ENCODE measurements at regions of chr18 and their contacts with region 1.

Region 1: GRCh38 chr18:74534981-74535649 is 815 bp downstream of the CNDP1 start:
- DNase-seq: peak in 1 of 10 donors; percentile 37
- H3K4me3 ChIP-seq: peak overlapping the region; percentile 21 to 74 (median 53)
- H3K27ac ChIP-seq: peak overlapping the region in 57 of 59 donors; percentile 19 to 97 (median 91)
- H3K27me3 ChIP-seq: no peaks in the 10 kb centered on the region
- CTCF ChIP-seq: no peak

Region 2: DNA sequence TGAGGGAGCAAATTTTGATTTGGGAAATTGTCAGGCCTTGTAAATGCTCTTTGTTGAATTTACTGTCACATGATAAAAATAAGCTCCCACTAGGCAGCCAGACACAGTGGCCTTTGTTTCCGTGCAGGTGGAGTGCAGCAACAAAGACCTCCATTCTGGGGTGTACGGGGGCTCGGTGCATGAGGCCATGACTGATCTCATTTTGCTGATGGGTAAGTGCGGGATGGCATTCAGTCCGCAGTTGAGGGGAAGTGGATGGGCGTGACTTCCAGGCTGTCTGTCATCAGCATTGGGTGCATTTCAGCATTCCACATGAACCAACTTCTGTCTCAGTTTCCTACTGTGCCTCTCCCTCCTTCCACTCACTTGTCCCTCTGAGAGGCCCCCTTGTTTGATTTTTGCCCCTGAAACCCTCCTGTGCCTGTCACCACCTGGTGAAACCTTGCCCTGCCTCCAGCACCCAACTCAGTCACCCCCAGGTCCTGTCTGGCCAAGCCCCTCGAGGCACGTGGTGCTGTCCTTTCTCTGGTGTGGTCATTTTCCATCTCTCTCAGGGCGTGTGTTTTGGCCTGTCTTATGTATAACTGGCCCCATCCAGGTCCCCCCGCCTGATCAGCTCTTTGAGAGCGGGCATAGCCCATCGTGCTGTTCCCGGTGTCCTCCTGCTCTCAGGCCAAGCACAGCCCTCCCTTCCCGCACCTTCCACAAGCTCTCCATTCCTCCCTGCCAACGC is 22.6 kb before region 1 on chr18:
- intact Hi-C with region 1: loop called (anchors 1 to 2 kb)
- DNase-seq: peak in 9 of 10 donors; percentile 72 to 95 (median 89)
- H3K4me3 ChIP-seq: peak overlapping the region in 4 of 59 donors; percentile 3 to 27 (median 23)
- H3K27ac ChIP-seq: peak overlapping the region; percentile 70 to 100 (median 96)
- H3K27me3 ChIP-seq: no peaks in the 10 kb centered on the region
- CTCF ChIP-seq: peak in 1 of 56 donors; percentile 19

Region 3: DNA sequence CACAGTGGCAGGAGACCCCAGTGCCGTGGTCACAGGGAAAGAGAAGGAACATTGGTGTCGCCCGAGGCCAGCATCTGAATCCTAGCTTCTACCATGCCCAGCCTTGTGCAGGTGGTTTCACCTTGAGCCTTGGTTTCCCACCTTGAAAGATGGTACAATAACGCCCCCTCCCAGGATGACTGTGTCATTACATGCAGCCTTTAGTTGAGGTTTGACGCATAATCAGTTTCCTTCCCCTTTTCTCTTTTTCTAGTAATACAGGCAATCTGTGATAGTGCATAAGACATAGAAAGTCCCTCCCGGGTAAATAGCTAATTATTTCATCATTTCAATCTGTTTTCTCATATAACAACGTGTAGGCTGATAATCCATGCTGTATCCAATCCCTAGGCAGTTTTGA is 32.7 kb after region 1 on chr18:
- intact Hi-C with region 1: no loop called
- DNase-seq: no peak
- H3K4me3 ChIP-seq: no peak overlapping the region
- H3K27ac ChIP-seq: no peak overlapping the region
- H3K27me3 ChIP-seq: peaks cover 0 to 3% (median 0%) of the 10 kb centered on the region in 45 donors
- CTCF ChIP-seq: no peak

Measured in dorsolateral prefrontal cortex (tissue), 120 donors.